CD8-positive, alpha-beta memory T cell (primary cell): ENCODE measurements at regions of chr11 and their contacts with region 1.

Region 1: GRCh38 chr11:124800226-124800929 is at the start of gene MSANTD2:
- DNase-seq: peak; percentile 70 to 83 (median 80)
- H3K4me3 ChIP-seq: peak within 1 kb of the TSS; percentile 95
- H3K4me3 Mint-ChIP-seq: peak within 1 kb of the TSS; percentile 91 to 97 (median 93)
- H3K27ac ChIP-seq: peak within 1 kb of the TSS; percentile 94
- H3K27ac Mint-ChIP-seq: peak within 1 kb of the TSS; percentile 90 to 100 (median 96)
- H3K4me1 ChIP-seq: peaks cover 29% of the 10 kb centered on the region
- H3K4me1 Mint-ChIP-seq: peaks cover 25 to 43% (median 29%) of the 10 kb centered on the region in 3 donors
- H3K27me3 ChIP-seq: no peaks in the 10 kb centered on the region
- H3K27me3 Mint-ChIP-seq: peaks cover 0 to 2% of the 10 kb centered on the region in 2 donors
- total RNA-seq, gene MSANTD2: 12.3 to 13.2 TPM

Region 2: GRCh38 chr11:124746621-124747243 is 53.6 kb before region 1 on chr11:
- CTCF ChIA-PET with region 1: interaction called, 13 read pairs
- POLR2A ChIA-PET with region 1: interaction called, 7 read pairs
- DNase-seq: peak; percentile 71 to 86 (median 81)
- H3K4me3 ChIP-seq: peak overlapping the region; percentile 97
- H3K4me3 Mint-ChIP-seq: peak overlapping the region; percentile 90 to 97 (median 95)
- H3K27ac ChIP-seq: peak overlapping the region; percentile 76
- H3K27ac Mint-ChIP-seq: peak overlapping the region; percentile 46 to 93 (median 90)
- H3K4me1 ChIP-seq: peaks cover 9% of the 10 kb centered on the region
- H3K4me1 Mint-ChIP-seq: peaks cover 4 to 14% (median 7%) of the 10 kb centered on the region in 3 donors
- H3K27me3 ChIP-seq: no peaks in the 10 kb centered on the region
- H3K27me3 Mint-ChIP-seq: peaks cover 8 to 14% of the 10 kb centered on the region in 2 donors

Region 3: GRCh38 chr11:124837491-124837856 is 37.1 kb after region 1 on chr11:
- CTCF ChIA-PET with region 1: interaction called, 12 read pairs
- POLR2A ChIA-PET with region 1: interaction called, 4 read pairs
- DNase-seq: no peak
- H3K4me3 ChIP-seq: no peak overlapping the region
- H3K4me3 Mint-ChIP-seq: peak overlapping the region in 1 of 7 donors; percentile 58
- H3K27ac ChIP-seq: no peak overlapping the region
- H3K27ac Mint-ChIP-seq: no peak overlapping the region
- H3K4me1 ChIP-seq: no peaks in the 10 kb centered on the region
- H3K4me1 Mint-ChIP-seq: peaks cover 13 to 20% (median 16%) of the 10 kb centered on the region in 3 donors
- H3K27me3 ChIP-seq: peaks cover 47% of the 10 kb centered on the region
- H3K27me3 Mint-ChIP-seq: peaks cover 58 to 69% of the 10 kb centered on the region in 2 donors